AG04449 (cell line): ENCODE measurements at regions of chr1 and their contacts with region 1.

Region 1: GRCh38 chr1:115595279-115596079 is 46.3 kb upstream of the VANGL1 start:
- DNase-seq: peak; percentile 92
- H3K4me3 ChIP-seq: no peak overlapping the region
- CTCF ChIP-seq: peak; percentile 89

Region 2: DNA sequence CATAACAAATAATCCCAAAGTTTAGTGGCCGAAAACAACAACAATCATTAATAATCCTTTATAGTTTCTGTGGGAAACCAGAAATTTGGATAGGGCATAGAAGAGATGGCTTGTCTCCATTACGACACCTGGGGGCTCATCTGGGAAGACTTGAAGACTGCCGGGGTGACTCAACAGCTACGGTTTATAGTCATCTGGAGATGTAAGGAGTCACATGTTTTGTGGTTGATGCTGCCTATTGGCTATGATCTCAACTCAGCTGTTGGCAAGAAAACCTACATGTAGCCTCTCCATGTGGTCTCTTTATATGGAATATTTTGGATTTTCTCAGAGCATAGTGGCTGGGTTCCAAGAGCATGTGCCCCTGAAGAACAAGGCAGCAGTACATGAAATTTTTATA is 476.9 kb before region 1 on chr1:
- CTCF ChIA-PET with region 1: interaction called, 28 read pairs
- POLR2A ChIA-PET with region 1: no interaction called
- DNase-seq: no peak
- H3K4me3 ChIP-seq: no peak overlapping the region
- CTCF ChIP-seq: no peak

Region 3: DNA sequence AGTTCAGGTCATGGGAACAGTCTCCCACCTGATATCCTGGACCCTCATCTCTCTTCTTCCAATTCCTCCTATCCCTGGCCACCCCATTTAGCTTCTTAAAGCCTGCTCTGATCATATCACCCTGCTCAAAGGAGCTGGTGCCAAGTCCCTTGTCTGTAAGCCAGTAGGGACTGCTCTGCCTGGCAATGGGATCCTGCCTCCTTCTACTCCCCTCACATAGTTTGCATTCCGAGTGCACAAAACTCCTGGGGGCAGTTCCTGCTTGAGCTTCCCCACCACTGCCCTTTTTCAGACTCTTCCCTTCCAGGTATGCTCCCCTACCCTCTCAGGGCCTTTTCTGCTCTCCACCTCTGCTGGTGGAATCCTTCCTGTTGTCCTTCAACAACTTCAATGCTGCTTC is 305.5 kb before region 1 on chr1:
- CTCF ChIA-PET with region 1: interaction called, 10 read pairs
- POLR2A ChIA-PET with region 1: no interaction called
- DNase-seq: no peak
- H3K4me3 ChIP-seq: no peak overlapping the region
- CTCF ChIP-seq: no peak

Region 4: DNA sequence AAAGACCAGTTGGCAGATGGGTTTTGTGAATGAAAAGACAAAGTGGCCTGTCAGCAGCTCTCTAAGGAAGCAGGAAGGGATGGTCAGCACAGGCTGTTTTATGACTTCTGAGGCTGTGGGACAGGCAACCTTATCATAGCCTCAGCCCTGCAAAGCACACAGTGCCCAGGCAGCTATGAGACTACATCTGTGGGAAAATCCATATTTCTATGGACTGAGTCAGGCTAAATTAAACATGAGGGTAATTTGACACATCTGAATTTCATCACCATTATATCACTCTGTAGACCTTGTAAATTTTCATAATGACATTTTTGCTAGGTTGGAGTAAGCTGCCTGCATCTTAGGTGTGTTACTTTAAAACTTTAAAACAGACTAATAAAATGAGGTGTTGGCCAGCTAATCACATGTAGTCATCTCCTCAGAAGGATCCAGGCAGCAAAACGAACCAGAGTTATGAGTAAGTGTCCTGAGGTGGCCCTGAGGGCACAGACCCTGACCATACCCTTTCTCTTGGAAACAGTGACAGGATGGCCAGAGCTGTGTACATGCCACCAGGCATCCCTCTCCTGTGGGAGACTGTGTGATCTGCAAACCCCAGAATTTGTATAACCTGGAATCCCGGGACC is 272.0 kb before region 1 on chr1:
- CTCF ChIA-PET with region 1: interaction called, 24 read pairs
- POLR2A ChIA-PET with region 1: interaction called, 4 read pairs
- DNase-seq: no peak
- H3K4me3 ChIP-seq: no peak overlapping the region
- CTCF ChIP-seq: no peak

Region 5: GRCh38 chr1:115476616-115477015 is 118.9 kb before region 1 on chr1:
- CTCF ChIA-PET with region 1: interaction called, 61 read pairs
- POLR2A ChIA-PET with region 1: no interaction called
- DNase-seq: no peak
- H3K4me3 ChIP-seq: no peak overlapping the region
- CTCF ChIP-seq: peak; percentile 27

Region 6: GRCh38 chr1:115564206-115564605 is 31.3 kb before region 1 on chr1:
- CTCF ChIA-PET with region 1: interaction called, 17 read pairs
- POLR2A ChIA-PET with region 1: no interaction called
- DNase-seq: no peak
- H3K4me3 ChIP-seq: peak overlapping the region; percentile 30
- CTCF ChIP-seq: no peak